PC-9 (cell line): ENCODE measurements at regions of chr7 and their contacts with region 1.

Region 1: GRCh38 chr7:139035586-139036353 is at the start of gene ZC3HAV1L:
- DNase-seq: peak; percentile 47 to 83
- H3K4me3 ChIP-seq: peak within 1 kb of the TSS; percentile 95
- H3K27ac ChIP-seq: peak within 1 kb of the TSS; percentile 56
- H3K4me1 ChIP-seq: peaks cover 15% of the 10 kb centered on the region
- H3K27me3 ChIP-seq: no peaks in the 10 kb centered on the region
- CTCF ChIP-seq: no peak
- total RNA-seq, gene ZC3HAV1L: 34.2 and 34.8 TPM in 2 replicates

Region 2: DNA sequence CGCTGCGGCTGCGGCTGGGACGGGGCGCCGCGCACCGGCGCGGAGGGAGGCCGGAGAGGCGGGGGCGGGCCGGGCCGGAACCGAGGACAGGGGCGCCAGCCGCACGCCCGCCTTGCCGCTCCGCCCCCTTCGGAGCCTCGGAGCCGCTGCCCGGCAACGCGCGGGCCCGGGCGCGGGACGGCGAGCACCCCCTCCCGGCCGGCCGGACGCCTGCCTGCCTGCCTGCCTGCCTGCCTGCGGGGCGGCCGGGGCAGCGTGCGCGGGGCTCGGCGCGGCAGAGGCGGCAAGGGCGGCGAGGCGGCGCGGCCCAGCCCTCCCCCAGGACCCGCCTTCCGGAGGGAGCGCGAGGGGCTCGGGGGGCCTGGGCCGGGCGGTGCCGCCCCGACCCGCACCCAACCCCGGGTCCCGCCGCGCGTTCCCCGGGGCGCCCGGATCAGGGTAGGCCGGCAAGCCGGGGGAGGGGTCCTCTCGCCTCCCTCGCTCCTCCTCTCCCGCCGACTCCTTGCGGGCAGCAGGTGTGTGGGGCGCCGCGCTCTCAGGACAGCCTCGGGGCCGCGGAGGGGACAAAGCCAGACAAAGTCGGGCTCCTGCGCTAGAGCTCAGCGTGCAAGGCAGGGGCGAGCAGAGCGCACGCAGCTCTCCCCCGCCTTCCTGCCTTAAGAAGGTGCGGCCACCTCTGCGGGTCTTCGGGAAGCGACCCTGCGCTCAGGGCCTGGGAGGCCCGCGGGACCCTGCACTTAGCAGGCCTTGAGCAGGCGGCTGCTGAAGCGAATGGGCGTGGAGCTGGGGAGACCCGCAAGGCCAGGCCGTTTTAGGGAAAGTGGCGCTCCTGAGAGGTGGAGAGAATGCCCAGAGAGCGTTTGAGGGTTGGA is 54.2 kb before region 1 on chr7 and contains the start of gene KIAA1549:
- CTCF ChIA-PET with region 1: interaction called, 10 read pairs
- POLR2A ChIA-PET with region 1: no interaction called
- intact Hi-C with region 1: no loop called
- DNase-seq: peak in 1 of 2 experiments; percentile 78
- H3K4me3 ChIP-seq: peak within 1 kb of the TSS; percentile 73
- H3K27ac ChIP-seq: no peak within 1 kb of the TSS
- H3K4me1 ChIP-seq: peaks cover 34% of the 10 kb centered on the region
- H3K27me3 ChIP-seq: no peaks in the 10 kb centered on the region
- CTCF ChIP-seq: no peak
- total RNA-seq, gene KIAA1549: 20.2 and 26.6 TPM in 2 replicates

Region 3: DNA sequence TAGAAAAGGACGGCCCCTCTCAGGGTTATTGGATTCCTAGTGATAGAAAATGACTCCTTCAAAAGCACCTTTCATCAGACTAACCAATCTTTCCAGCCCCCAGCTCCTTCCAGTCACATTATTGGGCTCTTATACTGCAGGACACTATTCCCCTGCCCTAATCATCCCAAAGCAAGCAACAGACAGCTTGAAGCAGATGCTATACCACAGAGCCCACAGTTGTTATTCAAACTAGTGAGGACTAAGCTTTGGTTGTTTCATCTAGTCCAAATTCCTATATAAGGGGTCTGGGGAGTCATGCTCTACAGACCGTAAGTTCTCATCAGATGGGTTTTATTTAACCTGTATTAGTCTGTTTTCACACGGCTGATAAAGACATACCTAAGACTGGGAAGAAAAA is 24.4 kb before region 1 on chr7:
- CTCF ChIA-PET with region 1: no interaction called
- POLR2A ChIA-PET with region 1: no interaction called
- intact Hi-C with region 1: no loop called
- DNase-seq: no peak
- H3K4me3 ChIP-seq: no peak overlapping the region
- H3K27ac ChIP-seq: no peak overlapping the region
- H3K4me1 ChIP-seq: no peaks in the 10 kb centered on the region
- H3K27me3 ChIP-seq: no peaks in the 10 kb centered on the region
- CTCF ChIP-seq: no peak

Region 4: DNA sequence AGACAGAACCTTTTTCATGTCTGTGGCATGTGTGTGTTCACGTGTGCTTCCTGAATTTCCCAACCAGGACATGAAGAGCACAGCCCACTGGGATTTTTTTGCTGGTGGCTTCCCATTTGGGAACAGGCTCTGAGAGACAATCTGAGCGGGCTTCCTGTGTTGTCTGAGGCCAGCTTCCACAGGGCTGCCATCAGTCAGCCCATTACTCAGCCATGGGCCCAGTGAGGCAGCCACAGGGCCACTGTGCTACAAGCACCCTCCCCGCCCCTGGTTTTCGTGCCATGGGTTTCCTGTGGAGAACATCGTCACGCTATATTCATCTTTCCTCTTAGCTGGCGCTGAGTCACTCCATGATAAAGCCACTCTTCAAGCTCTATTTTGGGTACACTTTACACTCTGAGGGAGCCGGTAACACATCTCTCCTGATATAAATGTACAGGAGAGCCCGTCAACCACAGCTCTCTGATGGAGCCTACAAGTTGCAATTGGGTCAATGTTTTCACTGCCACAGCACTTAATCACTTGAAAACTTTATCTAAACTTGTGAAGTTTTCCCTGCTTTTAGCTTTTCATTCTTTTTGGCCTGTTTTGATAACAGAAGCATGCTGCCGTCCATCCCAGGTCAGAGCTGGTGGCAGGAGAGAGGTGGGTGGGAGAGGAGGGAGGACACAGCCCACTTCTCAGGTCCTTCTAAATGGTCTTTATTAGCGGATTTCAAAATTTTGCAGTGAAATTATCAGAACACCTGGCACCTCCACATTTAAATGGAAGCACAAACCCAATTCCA is 645.1 kb after region 1 on chr7:
- CTCF ChIA-PET with region 1: no interaction called
- POLR2A ChIA-PET with region 1: interaction called, 18 read pairs
- intact Hi-C with region 1: no loop called
- DNase-seq: peak; percentile 48 to 56
- H3K4me3 ChIP-seq: no peak overlapping the region
- H3K27ac ChIP-seq: 0 out of 2 replicates have a peak overlapping the region, but pooled peaks have one; percentile 21
- H3K4me1 ChIP-seq: 0 out of 2 replicates have a peak, but pooled peaks cover 3% of the 10 kb centered on the region
- H3K27me3 ChIP-seq: no peaks in the 10 kb centered on the region
- CTCF ChIP-seq: no peak